ENCODE measurements at regions of chr6 and their contacts with region 1.

Region 1: GRCh38 chr6:141552473-141552878 is 580.2 kb upstream of the GJE1 start:
- DNase-seq: peak; percentile 12
- H3K4me3 Mint-ChIP-seq: peak overlapping the region; percentile 21
- H3K27ac Mint-ChIP-seq: peak overlapping the region; percentile 95
- H3K4me1 Mint-ChIP-seq: peaks cover 37% of the 10 kb centered on the region
- H3K27me3 Mint-ChIP-seq: no peaks in the 10 kb centered on the region
- CTCF ChIP-seq: no peak

Region 2: DNA sequence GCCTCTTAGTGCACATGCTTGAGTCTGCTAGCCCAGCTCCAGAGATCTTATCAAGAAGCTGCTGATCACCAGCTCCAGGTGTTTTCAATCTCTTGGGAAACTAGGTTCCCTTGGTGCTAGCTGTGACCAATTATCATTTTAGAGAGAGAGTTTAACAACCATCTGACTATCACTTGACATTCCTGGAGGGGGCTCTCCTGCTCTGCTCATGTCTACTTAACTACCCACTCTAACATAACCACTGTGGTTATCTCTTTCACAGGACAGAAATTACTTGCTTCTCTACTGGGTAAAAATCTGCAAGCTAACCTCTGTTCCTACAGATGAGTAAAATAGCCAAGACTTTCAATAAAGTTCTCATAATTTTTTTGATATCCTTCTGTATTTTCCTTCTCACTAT is 243.2 kb before region 1 on chr6:
- CTCF ChIA-PET with region 1: no interaction called
- intact Hi-C with region 1: loop called (anchors 2 kb)
- DNase-seq: no peak
- H3K4me3 Mint-ChIP-seq: no peak overlapping the region
- H3K27ac Mint-ChIP-seq: no peak overlapping the region
- H3K4me1 Mint-ChIP-seq: peaks cover 8% of the 10 kb centered on the region
- H3K27me3 Mint-ChIP-seq: no peaks in the 10 kb centered on the region
- CTCF ChIP-seq: no peak

Region 3: DNA sequence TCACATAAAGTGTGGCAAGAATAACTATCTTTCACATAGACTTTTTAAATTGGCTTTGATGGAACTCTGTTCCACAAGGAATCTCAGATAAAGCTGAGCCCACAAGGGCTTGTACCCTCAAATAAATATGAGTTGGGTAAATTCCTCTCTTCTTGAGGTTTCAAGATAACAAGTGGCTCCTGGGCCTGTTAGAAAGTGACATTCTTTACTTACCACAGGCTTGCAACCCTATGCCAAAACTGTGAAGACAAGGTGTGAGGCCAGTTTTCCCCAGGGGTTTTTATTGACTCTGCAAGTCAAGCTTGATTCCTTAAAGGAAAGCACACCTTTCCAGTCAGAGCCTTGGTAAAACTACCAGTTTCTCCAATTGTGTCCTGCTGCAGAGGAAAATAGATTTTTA is 84.6 kb before region 1 on chr6:
- CTCF ChIA-PET with region 1: no interaction called
- intact Hi-C with region 1: loop called (anchors 5 kb)
- DNase-seq: no peak
- H3K4me3 Mint-ChIP-seq: no peak overlapping the region
- H3K27ac Mint-ChIP-seq: no peak overlapping the region
- H3K4me1 Mint-ChIP-seq: no peaks in the 10 kb centered on the region
- H3K27me3 Mint-ChIP-seq: no peaks in the 10 kb centered on the region
- CTCF ChIP-seq: no peak

Region 4: GRCh38 chr6:141610736-141611135 is 58.3 kb after region 1 on chr6:
- CTCF ChIA-PET with region 1: no interaction called
- intact Hi-C with region 1: no loop called
- DNase-seq: no peak
- H3K4me3 Mint-ChIP-seq: no peak overlapping the region
- H3K27ac Mint-ChIP-seq: no peak overlapping the region
- H3K4me1 Mint-ChIP-seq: no peaks in the 10 kb centered on the region
- H3K27me3 Mint-ChIP-seq: no peaks in the 10 kb centered on the region
- CTCF ChIP-seq: no peak

Region 5: DNA sequence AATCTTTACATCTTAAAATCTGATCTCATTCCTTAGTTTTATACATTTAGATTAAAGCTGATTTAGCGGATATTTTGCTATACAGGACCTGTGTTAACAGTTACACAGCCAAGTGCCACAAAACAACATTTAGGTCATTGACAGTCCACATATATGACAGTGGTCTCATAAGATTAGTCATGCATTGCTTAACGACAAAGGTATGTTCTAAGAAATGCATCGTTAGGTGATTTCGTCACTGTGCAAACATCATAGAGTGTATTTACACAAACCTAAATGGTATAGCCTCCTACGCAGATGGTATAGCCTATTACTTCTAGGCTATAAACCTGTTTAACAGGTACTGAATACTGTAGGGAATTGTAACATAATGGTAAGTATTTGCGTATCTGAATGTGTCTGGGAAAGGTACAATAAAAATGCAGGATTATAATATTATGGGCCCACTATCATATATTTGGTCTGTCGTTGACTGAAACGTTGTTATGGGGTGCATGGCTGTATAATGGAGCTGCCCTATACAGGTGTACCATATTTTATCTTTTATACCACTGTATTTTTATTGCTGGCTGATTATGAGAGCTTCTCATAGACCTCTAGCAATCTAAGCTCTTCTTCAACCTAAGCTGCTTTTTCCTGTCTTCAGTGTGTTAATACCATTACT is 771.0 kb after region 1 on chr6:
- CTCF ChIA-PET with region 1: no interaction called
- intact Hi-C with region 1: no loop called
- DNase-seq: no peak
- H3K4me3 Mint-ChIP-seq: no peak overlapping the region
- H3K27ac Mint-ChIP-seq: peak overlapping the region; percentile 56
- H3K4me1 Mint-ChIP-seq: peaks cover 39% of the 10 kb centered on the region
- H3K27me3 Mint-ChIP-seq: no peaks in the 10 kb centered on the region
- CTCF ChIP-seq: no peak